ENCODE measurements at regions of chr16 and their contacts with region 1.

Region 1: DNA sequence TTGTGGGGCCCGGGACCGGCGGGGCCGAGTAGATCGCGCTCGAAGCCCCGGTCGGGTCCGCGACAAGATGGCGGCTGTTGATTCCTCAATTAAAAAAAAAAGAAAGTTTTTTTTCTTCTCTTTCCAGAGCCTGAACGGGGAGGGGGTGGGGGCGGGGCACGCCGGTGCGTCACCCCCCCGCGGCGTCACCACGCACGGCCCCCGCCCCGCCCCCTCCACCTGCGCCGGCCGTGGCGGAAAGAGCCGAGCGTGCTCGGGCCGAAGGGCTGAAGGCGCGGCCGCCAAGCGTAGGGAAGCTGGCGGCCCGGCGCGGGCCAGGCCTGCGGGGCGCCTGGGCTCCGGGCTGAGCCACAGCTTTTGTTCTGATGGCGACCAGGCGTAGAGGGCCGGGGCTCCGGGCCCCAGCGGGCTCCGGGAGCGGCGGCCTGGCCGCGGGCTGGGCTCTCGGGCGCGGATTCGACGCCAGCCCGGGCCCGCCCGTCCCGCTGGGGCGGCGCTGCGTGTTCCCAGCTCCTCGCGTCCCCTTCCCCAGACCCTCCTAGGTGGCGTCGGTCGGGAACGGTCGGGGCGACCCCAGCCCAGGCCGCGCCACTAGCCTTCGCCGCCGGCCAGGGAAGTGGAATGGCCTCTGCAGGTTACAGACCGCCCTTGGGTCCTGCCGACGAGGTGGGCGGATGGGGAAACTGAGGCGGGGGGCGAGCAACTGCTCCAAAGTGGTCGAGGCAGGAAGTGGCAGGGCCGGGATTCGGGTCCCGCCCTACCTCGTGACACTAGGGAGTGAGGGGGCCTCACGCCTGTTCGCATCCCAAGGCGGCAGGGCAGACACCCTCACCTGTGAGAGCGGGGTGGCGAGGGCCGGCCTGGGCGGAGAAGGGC is at the start of gene CREBBP:
- DNase-seq: peak; percentile 85
- H3K4me3 Mint-ChIP-seq: peak within 1 kb of the TSS; percentile 88
- H3K27ac Mint-ChIP-seq: peak within 1 kb of the TSS; percentile 89
- H3K4me1 Mint-ChIP-seq: peaks cover 33% of the 10 kb centered on the region
- H3K27me3 Mint-ChIP-seq: no peaks in the 10 kb centered on the region
- total RNA-seq, gene CREBBP: 29.9 to 33.0 TPM

Region 2: DNA sequence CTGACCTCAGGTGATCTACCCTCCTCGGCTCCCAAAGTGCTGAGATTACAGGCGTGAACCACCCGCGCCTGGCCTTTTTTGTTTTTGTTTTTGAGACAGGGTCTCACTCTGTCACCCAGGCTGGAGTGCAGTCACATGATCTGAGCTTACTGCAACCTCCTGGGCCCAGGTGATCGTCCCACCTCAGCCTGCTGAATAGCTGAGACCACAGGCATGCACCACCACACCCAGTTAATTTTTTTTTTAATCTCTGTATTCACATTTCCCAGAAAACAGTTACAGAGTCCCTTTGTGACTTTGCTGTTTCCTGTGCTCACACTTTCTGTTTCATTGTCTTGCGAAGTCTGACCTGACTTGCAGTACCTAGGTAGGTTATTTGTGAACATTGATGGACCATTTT is 377.3 kb before region 1 on chr16:
- CTCF ChIA-PET with region 1: no interaction called
- intact Hi-C with region 1: no loop called
- DNase-seq: peak; percentile 73
- H3K4me3 Mint-ChIP-seq: peak overlapping the region; percentile 88
- H3K27ac Mint-ChIP-seq: peak overlapping the region; percentile 89
- H3K4me1 Mint-ChIP-seq: peaks cover 68% of the 10 kb centered on the region
- H3K27me3 Mint-ChIP-seq: no peaks in the 10 kb centered on the region

Region 3: DNA sequence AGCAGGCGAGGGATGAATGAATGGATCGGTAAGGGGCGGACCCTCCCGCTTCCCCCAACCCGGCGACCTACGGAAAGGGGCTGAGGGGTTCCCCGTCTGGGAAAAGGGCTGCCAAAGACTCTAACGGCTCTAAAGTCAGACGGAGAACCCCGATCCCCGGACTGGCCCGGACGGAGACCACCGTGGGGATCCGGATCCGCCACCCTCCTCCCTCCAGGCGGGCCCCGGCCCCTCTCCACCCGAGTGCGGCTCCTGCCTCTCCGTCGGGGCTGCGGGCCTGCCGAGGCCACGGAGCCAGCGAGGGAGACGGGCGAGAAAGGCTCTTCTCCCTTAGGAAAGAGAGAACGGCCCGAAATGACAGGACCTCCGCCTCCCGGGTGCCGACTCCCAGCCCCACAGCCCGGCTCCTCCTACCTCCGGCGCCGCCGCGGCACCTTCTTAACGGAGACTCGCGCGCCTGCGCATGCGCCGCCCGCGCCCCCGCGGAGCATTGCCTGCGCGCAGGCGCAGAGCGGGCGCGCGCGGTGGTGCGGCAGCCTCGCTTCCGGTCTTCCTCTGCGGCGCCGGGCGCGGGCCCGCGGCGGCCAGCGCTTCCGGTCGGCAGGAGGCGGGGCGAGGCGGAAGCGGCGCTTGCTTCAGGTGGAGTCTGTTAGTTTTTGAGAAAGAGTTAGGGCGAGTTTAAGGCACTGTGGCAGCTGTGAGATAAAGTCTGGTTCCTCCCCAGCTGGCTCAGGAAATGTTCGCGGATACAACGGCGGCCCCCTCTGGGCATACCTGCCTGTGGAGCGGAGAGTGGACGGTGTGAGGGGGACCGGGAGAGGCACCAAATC is 269.5 kb before region 1 on chr16 and contains the start of gene SLX4:
- CTCF ChIA-PET with region 1: no interaction called
- intact Hi-C with region 1: loop called (anchors 1 kb)
- DNase-seq: peak; percentile 89
- H3K4me3 Mint-ChIP-seq: peak within 1 kb of the TSS; percentile 100
- H3K27ac Mint-ChIP-seq: peak within 1 kb of the TSS; percentile 98
- H3K4me1 Mint-ChIP-seq: peaks cover 43% of the 10 kb centered on the region
- H3K27me3 Mint-ChIP-seq: no peaks in the 10 kb centered on the region
- total RNA-seq, gene SLX4: 14.0 to 14.1 TPM

Region 4: GRCh38 chr16:3690470-3690928 is 190.4 kb before region 1 on chr16:
- CTCF ChIA-PET with region 1: interaction called, 4 read pairs
- intact Hi-C with region 1: loop called (anchors 1 kb)
- DNase-seq: peak; percentile 93
- H3K4me3 Mint-ChIP-seq: no peak overlapping the region
- H3K27ac Mint-ChIP-seq: no peak overlapping the region
- H3K4me1 Mint-ChIP-seq: peaks cover 9% of the 10 kb centered on the region
- H3K27me3 Mint-ChIP-seq: no peaks in the 10 kb centered on the region

Region 5: DNA sequence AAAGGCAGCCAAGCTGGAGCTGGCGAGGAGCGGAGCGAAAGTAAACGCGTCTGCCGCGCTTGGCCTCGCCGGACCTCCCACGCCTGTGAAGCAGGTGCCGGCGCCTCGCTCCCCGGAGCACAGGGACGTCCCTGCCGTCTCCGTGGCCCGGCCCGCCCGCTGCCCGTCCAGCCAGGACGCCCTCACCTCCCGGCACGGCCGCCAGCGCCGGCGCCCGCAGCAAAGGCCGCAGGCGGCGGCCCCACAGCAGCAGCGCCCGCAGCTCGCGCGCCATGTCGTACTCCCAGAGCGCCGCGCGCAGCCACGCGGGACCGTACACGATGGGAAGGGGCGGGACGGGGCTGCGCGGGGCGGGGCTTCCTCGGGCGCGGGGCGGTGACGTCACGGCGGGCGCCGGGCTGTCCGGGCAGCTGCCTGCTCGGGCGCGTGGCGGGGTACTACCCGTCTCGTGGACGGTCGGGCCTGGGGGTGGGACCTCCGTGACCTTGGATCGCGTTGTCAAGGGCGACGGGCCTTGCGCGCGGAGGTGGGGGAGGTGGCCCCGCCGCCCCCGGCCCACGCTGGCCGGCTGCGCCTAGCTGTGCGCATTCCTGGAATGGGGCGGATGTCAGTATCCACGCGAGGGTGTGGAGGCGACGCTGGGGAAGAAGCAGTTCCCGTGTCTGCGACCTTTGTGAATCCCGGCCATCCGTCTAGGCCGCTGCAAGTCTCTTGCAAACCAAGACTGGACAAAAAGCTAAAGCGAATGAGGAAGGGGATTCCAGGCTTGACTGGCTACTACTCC is 163.4 kb before region 1 on chr16 and contains the start of gene TRAP1:
- CTCF ChIA-PET with region 1: no interaction called
- intact Hi-C with region 1: loop called (anchors 1 kb)
- DNase-seq: peak; percentile 92
- H3K4me3 Mint-ChIP-seq: peak within 1 kb of the TSS; percentile 91
- H3K27ac Mint-ChIP-seq: peak within 1 kb of the TSS; percentile 84
- H3K4me1 Mint-ChIP-seq: peaks cover 42% of the 10 kb centered on the region
- H3K27me3 Mint-ChIP-seq: no peaks in the 10 kb centered on the region
- total RNA-seq, gene TRAP1: 384 to 396 TPM

Region 6: DNA sequence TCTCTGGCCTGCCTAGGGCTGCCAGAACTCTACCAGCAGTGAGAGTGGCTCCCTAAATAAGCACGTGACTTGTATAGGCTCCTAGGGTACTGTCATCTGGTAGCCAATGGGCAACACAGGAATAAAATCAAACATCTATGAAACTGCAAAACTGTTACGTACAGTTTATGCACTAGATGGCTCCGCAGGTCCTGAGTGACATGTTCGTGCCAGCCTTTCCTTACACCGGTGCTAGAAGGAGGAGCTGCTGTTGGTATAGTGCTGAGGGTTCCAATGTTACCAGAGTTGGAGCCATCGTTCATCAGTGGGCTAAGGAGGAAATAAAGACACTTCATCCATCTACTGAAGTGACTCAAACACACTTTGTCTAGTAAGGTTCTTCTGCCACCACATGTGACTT is 100.3 kb before region 1 on chr16:
- CTCF ChIA-PET with region 1: interaction called, 3 read pairs
- intact Hi-C with region 1: loop called (anchors 1 kb)
- DNase-seq: peak; percentile 41
- H3K4me3 Mint-ChIP-seq: no peak overlapping the region
- H3K27ac Mint-ChIP-seq: no peak overlapping the region
- H3K4me1 Mint-ChIP-seq: peaks cover 5% of the 10 kb centered on the region
- H3K27me3 Mint-ChIP-seq: no peaks in the 10 kb centered on the region

Region 7: GRCh38 chr16:3787924-3788661 is 92.8 kb before region 1 on chr16:
- CTCF ChIA-PET with region 1: no interaction called
- intact Hi-C with region 1: loop called (anchors 2 kb)
- DNase-seq: no peak
- H3K4me3 Mint-ChIP-seq: no peak overlapping the region
- H3K27ac Mint-ChIP-seq: no peak overlapping the region
- H3K4me1 Mint-ChIP-seq: peaks cover 47% of the 10 kb centered on the region
- H3K27me3 Mint-ChIP-seq: peaks cover 2% of the 10 kb centered on the region

Region 8: GRCh38 chr16:3807425-3808123 is 73.3 kb before region 1 on chr16:
- CTCF ChIA-PET with region 1: no interaction called
- intact Hi-C with region 1: loop called (anchors 2 kb)
- DNase-seq: peak; percentile 67
- H3K4me3 Mint-ChIP-seq: no peak overlapping the region
- H3K27ac Mint-ChIP-seq: peak overlapping the region; percentile 56
- H3K4me1 Mint-ChIP-seq: peaks cover 67% of the 10 kb centered on the region
- H3K27me3 Mint-ChIP-seq: no peaks in the 10 kb centered on the region

Region 9: DNA sequence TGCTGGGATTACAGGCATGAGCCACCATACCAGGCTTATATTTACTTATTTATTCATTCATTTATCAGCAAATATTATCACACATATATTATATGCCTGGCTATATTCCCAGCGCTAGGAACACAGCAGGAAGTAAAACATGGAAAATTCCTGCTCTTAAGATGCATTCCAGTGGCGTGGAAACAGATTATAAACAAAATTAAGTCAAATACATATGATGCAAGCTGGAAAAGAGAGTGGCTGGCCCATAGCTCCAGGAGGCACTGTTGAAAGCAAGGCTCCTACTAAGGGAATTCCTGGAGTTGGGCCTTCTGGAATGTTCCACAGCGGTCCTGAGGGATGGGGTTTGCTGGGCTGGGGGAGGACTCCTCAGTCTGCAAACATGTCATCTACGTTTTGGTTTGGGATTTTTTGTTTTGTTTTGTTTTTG is 217.0 kb after region 1 on chr16:
- CTCF ChIA-PET with region 1: no interaction called
- intact Hi-C with region 1: no loop called
- DNase-seq: no peak
- H3K4me3 Mint-ChIP-seq: no peak overlapping the region
- H3K27ac Mint-ChIP-seq: no peak overlapping the region
- H3K4me1 Mint-ChIP-seq: peaks cover 2% of the 10 kb centered on the region
- H3K27me3 Mint-ChIP-seq: no peaks in the 10 kb centered on the region